Left cardiac atrium (tissue), 4 donors: ENCODE measurements at regions of chr2 and their contacts with region 1.

Region 1: GRCh38 chr2:67840460-67841068 is 222.2 kb downstream of the C1D start:
- DNase-seq: peak; percentile 66
- ATAC-seq: peak; percentile 96

Region 2: GRCh38 chr2:66429071-66429477 is 1411.5 kb before region 1 on chr2:
- intact Hi-C with region 1: loop called in 1 of 2 experiments (anchors 5 kb)
- DNase-seq: no peak
- ATAC-seq: no peak

Region 3: DNA sequence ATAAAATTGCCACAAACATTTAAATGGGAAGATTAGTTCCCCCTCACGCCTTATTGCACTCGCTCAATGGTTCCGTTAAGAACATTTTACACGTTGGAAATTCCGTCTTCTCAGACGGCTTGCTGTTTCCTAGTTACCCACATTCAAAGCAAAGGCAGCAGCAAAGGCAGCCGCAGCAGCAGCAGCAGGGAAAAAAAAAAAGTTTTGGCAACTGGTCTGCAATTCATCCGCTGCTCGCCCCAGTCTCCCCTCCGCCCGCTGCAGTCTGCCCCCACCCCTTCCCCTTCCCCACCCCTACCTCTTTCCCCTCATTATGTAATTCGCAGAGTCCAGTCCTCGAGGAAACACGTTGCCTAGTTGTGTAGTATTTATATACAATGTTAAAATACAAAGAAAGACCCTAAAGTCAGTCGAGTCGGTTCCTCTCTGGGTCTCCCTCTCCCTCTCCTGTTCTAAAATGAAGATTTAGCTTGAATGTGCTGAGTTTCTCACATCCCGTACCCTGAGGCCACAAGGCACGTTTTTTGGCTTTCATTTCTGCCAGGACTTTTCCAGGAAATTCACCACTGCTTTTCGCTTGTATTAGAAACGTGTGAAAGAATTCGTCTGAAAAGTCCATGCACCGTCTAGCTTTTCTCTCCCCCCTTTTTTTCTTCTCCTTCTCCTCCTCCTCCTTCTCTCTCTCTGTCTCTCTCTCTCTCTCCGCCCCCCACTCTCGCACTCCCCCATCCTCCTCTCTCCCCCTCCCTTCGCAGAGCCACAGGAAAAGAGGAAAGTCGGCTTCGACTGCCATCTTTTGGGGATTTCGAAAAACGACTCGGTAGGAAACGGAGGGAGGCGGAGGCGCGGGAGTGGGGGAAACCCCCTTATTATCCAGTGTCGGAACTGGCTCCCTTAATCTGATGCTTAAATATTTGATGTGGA is 1265.6 kb before region 1 on chr2:
- intact Hi-C with region 1: loop called in 1 of 2 experiments (anchors 10 kb)
- DNase-seq: peak; percentile 57
- ATAC-seq: peak; percentile 78

Region 4: DNA sequence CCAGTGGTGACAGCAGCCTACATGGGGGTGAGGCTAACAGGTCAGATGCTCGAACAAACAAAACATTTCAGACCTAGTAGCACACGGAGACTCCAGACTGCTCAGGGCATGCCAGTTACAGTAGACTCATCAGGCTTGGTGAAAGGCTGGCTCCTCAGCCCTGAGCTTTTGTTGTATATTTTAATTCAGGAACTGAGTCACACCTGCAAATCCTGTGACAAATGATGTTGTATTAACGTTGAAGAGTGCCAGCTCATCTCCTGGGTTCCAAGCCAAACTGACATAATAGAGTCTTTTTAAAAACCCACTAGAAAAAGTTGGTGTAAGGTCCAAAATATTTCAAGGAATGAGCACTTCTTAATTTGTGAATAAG is 156.9 kb after region 1 on chr2:
- intact Hi-C with region 1: no loop called
- DNase-seq: no peak
- ATAC-seq: no peak

Region 5: GRCh38 chr2:68031542-68032160 is 191.1 kb after region 1 on chr2:
- intact Hi-C with region 1: loop called in 1 of 2 experiments (anchors 10 kb)
- DNase-seq: no peak
- ATAC-seq: no peak

Region 6: DNA sequence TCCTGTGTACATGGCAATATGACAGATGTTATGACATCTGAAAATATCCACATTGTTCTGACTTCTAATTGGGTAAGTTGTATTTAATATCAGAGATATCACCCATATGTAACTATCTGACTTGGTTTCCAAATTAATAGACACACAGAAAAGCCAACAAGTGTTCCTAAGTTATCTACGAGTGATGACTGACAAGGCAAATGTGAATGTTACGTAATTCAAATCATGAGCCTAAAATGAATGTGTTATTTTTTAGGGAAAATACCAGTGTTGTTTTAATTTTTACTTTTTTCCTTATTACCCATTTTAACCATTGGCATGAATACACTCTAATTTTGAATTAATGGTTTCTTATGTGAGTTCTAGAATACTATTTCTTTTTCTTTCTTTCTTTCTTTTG is 301.3 kb after region 1 on chr2:
- intact Hi-C with region 1: no loop called
- DNase-seq: no peak
- ATAC-seq: no peak